Left ventricle myocardium inferior (tissue), 1 donor: ENCODE measurements at regions of chr3 and their contacts with region 1.

Region 1: DNA sequence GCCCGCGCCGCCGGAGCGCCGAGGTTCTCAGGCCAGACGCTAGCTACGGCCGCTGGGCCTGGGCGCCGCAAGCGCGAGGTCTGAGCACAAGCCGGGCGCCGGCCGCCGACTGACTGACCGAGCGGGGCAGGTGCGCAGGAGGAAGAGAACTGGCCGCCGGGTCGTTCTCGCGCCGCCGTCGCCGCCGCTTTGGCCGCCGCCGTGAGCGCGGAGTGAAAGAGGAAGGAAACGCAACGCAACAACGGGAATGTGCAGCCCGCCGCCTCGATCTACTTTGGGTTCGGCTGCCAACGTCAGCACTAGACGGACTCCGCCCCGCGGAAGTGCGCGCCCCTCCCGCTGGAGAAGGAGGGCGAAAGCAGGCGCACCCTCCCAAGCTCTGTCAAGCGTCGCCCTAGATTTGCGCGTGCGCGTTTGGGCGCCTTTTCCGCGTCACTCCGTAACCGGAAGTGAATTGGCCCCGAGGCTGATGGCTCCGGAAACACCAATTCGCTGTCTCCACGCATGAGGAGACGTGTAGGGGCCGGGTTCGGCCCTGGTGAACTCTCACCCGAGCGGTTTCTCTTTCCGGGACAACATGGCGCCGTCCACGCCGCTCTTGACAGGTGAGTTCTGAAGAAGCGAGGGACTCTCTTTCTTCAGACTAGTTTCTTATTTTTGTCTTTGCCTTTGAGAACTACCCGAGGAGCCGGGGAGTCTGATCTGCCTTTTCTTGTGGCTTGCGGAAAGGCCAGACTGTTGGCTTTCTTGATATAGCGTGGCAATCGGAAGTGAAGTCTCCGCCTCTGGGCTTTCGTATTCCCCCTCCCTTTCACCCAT is at the starts of genes EIF2A and SERP1:
- DNase-seq: peak; percentile 98
- H3K4me3 ChIP-seq: peak within 1 kb of the TSS; percentile 85
- H3K27ac ChIP-seq: peak within 1 kb of the TSS; percentile 96
- H3K4me1 ChIP-seq: peaks cover 53% of the 10 kb centered on the region
- H3K27me3 ChIP-seq: no peaks in the 10 kb centered on the region
- CTCF ChIP-seq: no peak
- total RNA-seq, gene EIF2A: 71.6 TPM
- total RNA-seq, gene SERP1: 20.4 TPM

Region 2: GRCh38 chr3:150603153-150603979 is 56.9 kb after region 1 on chr3 and contains the start of gene SELENOT:
- intact Hi-C with region 1: loop called (anchors 10 kb)
- DNase-seq: peak; percentile 94
- H3K4me3 ChIP-seq: peak within 1 kb of the TSS; percentile 89
- H3K27ac ChIP-seq: peak within 1 kb of the TSS; percentile 96
- H3K4me1 ChIP-seq: peaks cover 75% of the 10 kb centered on the region
- H3K27me3 ChIP-seq: no peaks in the 10 kb centered on the region
- CTCF ChIP-seq: peak; percentile 52
- total RNA-seq, gene SELENOT: 70.3 TPM

Region 3: DNA sequence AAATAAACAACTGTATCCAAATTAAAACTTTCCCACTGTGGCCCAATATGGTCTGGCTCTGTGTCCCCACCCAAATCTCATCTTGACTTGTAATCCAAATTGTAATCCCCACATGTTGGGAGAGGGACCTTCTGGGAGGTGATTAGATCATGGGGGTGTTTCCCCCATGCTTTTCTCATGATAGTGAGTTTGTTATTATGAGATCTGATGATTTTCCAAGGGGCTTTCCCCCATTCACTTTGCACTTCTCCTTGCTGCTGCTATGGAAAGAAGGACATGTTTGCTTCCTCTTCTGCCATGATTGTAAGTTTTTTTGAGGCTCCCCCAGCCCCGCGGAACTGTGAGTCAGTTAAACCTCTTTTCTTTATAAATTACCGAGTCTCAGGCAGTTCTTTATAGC is 303.8 kb after region 1 on chr3:
- intact Hi-C with region 1: no loop called
- DNase-seq: no peak
- H3K4me3 ChIP-seq: no peak overlapping the region
- H3K27ac ChIP-seq: no peak overlapping the region
- H3K4me1 ChIP-seq: no peaks in the 10 kb centered on the region
- H3K27me3 ChIP-seq: no peaks in the 10 kb centered on the region
- CTCF ChIP-seq: no peak